ENCODE measurements at regions of chr13 and their contacts with region 1.

Region 1: DNA sequence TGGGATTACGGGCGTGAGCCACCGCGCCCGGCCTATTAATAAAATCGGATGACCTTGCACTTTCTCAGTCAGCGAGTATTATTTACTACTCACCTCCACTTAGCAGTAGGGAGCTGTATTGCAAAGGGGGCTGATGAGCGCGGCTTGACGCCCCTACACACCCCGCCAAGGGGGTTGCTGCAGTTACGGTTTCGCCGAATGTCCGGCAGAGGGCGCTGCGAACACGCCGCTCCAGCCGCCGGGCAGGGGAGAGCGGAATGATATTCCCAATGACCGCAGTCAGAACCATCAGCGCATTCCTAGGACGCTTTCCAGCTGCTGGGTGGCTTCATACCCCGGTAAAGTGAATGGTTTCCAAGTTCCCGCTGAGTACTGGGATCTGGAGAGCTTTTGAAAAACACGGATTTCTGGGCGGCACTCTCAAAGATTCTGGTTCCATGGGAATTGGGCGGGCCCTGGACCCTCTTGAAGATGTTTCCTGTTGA is 30.0 kb upstream of the TPT1 start:
- DNase-seq: peak; percentile 90
- ATAC-seq: peak; percentile 90
- H3K4me3 Mint-ChIP-seq: peak overlapping the region; percentile 44
- H3K27ac Mint-ChIP-seq: peak overlapping the region; percentile 50
- H3K4me1 Mint-ChIP-seq: peaks cover 35% of the 10 kb centered on the region
- H3K27me3 Mint-ChIP-seq: no peaks in the 10 kb centered on the region
- CTCF ChIP-seq: peak; percentile 95

Region 2: DNA sequence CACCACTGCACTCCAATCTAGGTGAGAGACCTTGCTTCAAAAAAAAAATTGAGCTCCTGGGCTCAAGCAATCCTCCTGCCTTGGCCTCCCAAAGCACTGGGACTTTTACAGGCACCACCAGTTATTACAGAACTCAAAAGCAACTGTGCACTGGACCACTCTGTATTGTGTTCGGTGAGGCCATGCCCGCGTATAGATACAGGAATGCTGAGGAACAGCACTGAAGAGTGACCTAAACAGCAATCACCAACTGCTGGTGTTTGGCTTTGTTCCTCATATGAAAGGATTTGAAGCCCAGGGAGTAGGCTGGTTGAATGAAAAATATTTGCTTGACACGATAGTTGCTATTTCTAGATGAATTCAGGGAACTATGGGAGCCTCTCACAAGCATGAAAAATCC is 17.7 kb after region 1 on chr13:
- CTCF ChIA-PET with region 1: interaction called, 87 read pairs
- POLR2A ChIA-PET with region 1: interaction called, 4 read pairs
- DNase-seq: no peak
- ATAC-seq: no peak
- H3K4me3 Mint-ChIP-seq: no peak overlapping the region
- H3K27ac Mint-ChIP-seq: no peak overlapping the region
- H3K4me1 Mint-ChIP-seq: no peaks in the 10 kb centered on the region
- H3K27me3 Mint-ChIP-seq: no peaks in the 10 kb centered on the region
- CTCF ChIP-seq: no peak

Region 3: DNA sequence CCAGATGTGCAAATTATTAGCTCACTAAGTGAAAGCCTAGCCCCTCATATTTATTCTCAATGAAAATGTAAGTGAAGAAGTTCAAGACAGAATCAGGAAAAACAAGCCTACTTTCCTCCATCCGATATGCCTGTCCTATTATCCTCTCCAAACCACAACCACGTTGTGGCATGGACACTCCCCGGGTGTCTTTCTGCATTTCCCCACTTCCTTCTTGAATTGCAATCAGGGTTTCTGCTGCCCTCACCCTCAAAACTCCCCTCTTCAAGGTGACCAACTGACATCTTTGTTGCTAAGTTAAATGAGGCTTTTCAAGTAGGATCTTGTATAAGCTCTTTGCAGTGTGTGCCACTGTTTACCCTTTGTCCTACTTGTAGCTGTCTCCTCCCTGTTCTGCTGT is 35.5 kb after region 1 on chr13:
- CTCF ChIA-PET with region 1: interaction called, 12 read pairs
- POLR2A ChIA-PET with region 1: no interaction called
- DNase-seq: no peak
- ATAC-seq: no peak
- H3K4me3 Mint-ChIP-seq: no peak overlapping the region
- H3K27ac Mint-ChIP-seq: no peak overlapping the region
- H3K4me1 Mint-ChIP-seq: no peaks in the 10 kb centered on the region
- H3K27me3 Mint-ChIP-seq: no peaks in the 10 kb centered on the region
- CTCF ChIP-seq: no peak

Region 4: GRCh38 chr13:45433381-45433790 is 62.4 kb after region 1 on chr13:
- CTCF ChIA-PET with region 1: no interaction called
- POLR2A ChIA-PET with region 1: no interaction called
- DNase-seq: no peak
- ATAC-seq: no peak
- H3K4me3 Mint-ChIP-seq: no peak overlapping the region
- H3K27ac Mint-ChIP-seq: no peak overlapping the region
- H3K4me1 Mint-ChIP-seq: peaks cover 5% of the 10 kb centered on the region; the same call in 1 of the 2 replicates
- H3K27me3 Mint-ChIP-seq: no peaks in the 10 kb centered on the region
- CTCF ChIP-seq: no peak

Region 5: GRCh38 chr13:45473627-45474026 is 102.7 kb after region 1 on chr13:
- CTCF ChIA-PET with region 1: interaction called, 21 read pairs
- POLR2A ChIA-PET with region 1: no interaction called
- DNase-seq: no peak
- ATAC-seq: peak; percentile 87
- H3K4me3 Mint-ChIP-seq: no peak overlapping the region
- H3K27ac Mint-ChIP-seq: no peak overlapping the region
- H3K4me1 Mint-ChIP-seq: peaks cover 2% of the 10 kb centered on the region; the same call in 1 of the 2 replicates
- H3K27me3 Mint-ChIP-seq: no peaks in the 10 kb centered on the region
- CTCF ChIP-seq: no peak

Region 6: DNA sequence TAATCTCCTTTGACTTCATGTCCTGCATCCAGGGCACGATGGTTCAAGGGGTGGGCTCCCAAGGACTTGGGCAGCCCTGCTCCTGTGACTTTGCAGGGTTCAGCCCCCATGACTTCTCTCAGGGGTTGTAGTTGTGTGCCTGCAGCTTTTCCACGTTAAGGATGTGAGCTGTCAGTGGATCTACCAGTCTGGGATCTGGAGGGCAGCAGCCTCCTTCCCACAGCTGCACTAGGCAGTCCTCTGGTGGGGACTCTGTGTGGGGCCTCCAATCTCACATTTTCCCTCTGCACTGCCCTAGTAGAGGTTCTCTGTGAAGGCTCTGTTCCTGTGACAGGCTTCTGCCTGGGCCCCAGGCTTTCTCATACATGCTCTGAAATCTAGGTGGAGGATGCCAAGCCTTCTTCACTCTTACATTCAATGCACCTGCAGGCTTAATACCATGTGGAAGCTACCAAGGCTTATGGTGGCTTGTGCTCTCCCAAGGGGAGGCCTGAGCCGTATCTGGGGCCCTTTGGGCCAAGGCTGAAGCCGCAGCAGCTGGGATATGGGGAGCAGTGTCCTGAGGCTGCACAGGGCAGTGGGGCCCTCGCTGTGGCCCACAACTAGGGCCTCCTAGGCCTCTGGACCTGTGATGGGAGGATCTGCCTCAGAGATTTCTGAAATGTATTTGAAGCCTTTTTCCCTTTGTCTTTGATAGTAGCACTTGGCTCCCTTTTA is 283.8 kb after region 1 on chr13:
- CTCF ChIA-PET with region 1: no interaction called
- POLR2A ChIA-PET with region 1: no interaction called
- DNase-seq: no peak
- ATAC-seq: no peak
- H3K4me3 Mint-ChIP-seq: no peak overlapping the region
- H3K27ac Mint-ChIP-seq: no peak overlapping the region
- H3K4me1 Mint-ChIP-seq: no peaks in the 10 kb centered on the region
- H3K27me3 Mint-ChIP-seq: no peaks in the 10 kb centered on the region
- CTCF ChIP-seq: no peak